GM12878 (cell line): ENCODE measurements at regions of chr9 and their contacts with region 1.

Region 1: DNA sequence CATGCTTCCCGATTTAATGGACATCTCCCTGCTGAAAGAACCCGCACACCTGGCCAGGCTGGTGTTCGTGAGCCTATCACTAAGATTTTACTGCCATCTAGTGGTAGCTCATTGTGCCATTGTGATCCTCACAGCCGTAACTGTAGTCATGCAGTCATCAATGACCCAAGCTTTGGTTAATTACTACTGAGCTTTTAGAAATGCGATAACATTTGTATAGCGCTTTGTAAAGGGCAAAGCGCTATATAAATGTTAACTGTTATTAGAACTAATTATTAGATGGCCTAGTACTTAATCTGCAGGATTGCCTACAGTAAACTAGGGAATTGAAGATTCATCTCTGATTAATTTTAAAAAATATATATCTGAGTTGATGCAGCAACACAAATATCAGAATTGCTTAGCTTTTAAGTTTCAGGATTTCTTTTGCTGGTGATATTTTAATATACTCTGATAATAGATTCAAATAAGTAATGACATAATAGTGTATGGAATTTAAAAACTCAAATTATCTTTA is 90.2 kb downstream of the HACD4 start:
- DNase-seq: peak; percentile 54
- ATAC-seq: peak; percentile 100
- H3K4me3 ChIP-seq: no peak overlapping the region
- H3K27ac ChIP-seq: no peak overlapping the region
- H3K4me1 ChIP-seq: no peaks in the 10 kb centered on the region
- H3K27me3 ChIP-seq: no peaks in the 10 kb centered on the region
- CTCF ChIP-seq: peak; percentile 77 to 84 (median 84)
- EP300 ChIP-seq: no peak
- POLR2A ChIP-seq: no peak
- RAD21 ChIP-seq: peak; percentile 93

Region 2: GRCh38 chr9:19925817-19926503 is 1015.3 kb before region 1 on chr9:
- CTCF ChIA-PET with region 1: interaction called, 12 read pairs
- POLR2A ChIA-PET with region 1: no interaction called
- RAD21 ChIA-PET with region 1: interaction called, 11 read pairs
- SMC1A ChIA-PET with region 1: interaction called, 6 read pairs
- in situ Hi-C with region 1: loop called (anchors 5 kb)
- intact Hi-C with region 1: loop called (anchors 1 kb)
- DNase-seq: peak; percentile 48
- ATAC-seq: peak; percentile 98
- H3K4me3 ChIP-seq: peak overlapping the region; percentile 56; the same call in 1 of the 2 replicates
- H3K27ac ChIP-seq: no peak overlapping the region
- H3K4me1 ChIP-seq: no peaks in the 10 kb centered on the region; the same call in 1 of the 2 replicates
- H3K27me3 ChIP-seq: no peaks in the 10 kb centered on the region; a peak in 2 of 4 replicates
- CTCF ChIP-seq: peak; percentile 94 to 97 (median 96)
- EP300 ChIP-seq: no peak
- POLR2A ChIP-seq: no peak
- RAD21 ChIP-seq: peak; percentile 98

Region 3: DNA sequence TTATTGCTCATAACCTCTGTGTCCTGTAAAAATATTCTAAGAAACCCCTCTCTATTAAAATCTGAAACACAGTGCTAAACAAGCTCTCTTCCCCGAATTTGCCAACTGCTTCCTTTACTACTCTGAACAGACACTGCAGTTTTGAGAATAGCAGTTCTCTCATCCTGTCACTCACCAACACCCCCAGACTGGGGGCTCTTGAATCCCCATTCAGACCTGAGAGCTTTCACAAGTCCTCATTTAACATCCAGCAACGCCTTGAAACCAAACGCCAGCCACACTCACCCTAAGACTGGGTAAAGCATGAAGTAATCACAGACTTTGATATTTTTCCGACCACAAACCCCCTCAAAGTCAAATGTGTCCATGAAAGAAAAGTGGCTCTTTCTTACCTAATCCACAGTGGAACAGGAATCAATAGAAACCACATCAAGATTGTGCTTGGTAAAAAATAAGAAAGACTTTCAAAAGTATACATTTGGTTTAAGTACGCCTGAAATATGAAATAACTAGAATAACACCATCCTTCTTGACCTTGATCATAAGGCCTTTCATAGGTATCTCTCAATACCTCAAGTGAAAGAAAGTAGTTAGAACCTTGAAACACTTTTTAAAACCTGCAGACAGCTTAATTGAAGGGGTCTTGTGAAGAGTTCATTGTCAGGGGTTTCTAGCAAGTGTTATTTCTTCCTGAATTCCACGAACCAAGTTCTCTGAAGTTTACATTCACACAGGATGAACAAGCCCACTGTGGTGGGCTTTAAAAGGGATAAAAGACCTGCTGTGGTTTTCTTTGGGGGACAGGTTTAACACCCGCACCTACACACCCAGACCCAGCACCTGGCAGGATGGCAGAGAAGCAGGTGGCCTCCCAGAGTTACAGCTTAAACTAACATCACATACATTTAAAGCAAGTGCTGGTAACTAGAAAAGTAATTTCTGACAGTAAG is 731.6 kb before region 1 on chr9:
- CTCF ChIA-PET with region 1: no interaction called
- POLR2A ChIA-PET with region 1: no interaction called
- RAD21 ChIA-PET with region 1: no interaction called
- SMC1A ChIA-PET with region 1: no interaction called
- in situ Hi-C with region 1: no loop called
- intact Hi-C with region 1: loop called (anchors 10 kb)
- DNase-seq: peak; percentile 2
- ATAC-seq: peak; percentile 38
- H3K4me3 ChIP-seq: no peak overlapping the region
- H3K27ac ChIP-seq: no peak overlapping the region
- H3K4me1 ChIP-seq: no peaks in the 10 kb centered on the region
- H3K27me3 ChIP-seq: no peaks in the 10 kb centered on the region
- CTCF ChIP-seq: no peak
- EP300 ChIP-seq: no peak
- POLR2A ChIP-seq: no peak
- RAD21 ChIP-seq: no peak

Region 4: DNA sequence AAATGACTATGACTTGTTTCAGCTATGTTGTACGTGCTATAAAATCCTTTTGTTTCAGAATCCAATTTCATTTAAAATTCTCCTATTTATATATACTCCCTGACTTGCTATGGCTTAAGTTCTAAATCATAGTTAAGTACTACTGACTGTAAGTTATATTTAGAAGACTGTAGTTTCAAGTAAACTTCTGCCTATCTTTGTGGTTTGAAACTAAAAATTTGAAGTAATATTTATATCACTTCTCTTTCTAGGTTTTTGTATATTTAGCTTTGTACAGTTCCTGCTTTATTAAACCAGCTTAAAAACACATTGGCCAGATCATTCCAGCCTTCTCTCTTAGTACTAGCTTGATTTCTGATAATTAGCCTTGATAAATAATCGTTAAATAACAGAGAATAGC is 515.2 kb before region 1 on chr9:
- CTCF ChIA-PET with region 1: interaction called, 7 read pairs
- POLR2A ChIA-PET with region 1: no interaction called
- RAD21 ChIA-PET with region 1: interaction called, 5 read pairs
- SMC1A ChIA-PET with region 1: interaction called, 3 read pairs
- in situ Hi-C with region 1: no loop called
- intact Hi-C with region 1: loop called (anchors 2 kb)
- DNase-seq: no peak
- ATAC-seq: peak; percentile 70
- H3K4me3 ChIP-seq: no peak overlapping the region; the same call in 1 of the 2 replicates
- H3K27ac ChIP-seq: no peak overlapping the region; the same call in 1 of the 2 replicates
- H3K4me1 ChIP-seq: peaks cover 14% of the 10 kb centered on the region; the same call in 1 of the 2 replicates
- H3K27me3 ChIP-seq: no peaks in the 10 kb centered on the region
- CTCF ChIP-seq: no peak
- EP300 ChIP-seq: no peak
- POLR2A ChIP-seq: no peak
- RAD21 ChIP-seq: no peak

Region 5: GRCh38 chr9:20884985-20885593 is 56.1 kb before region 1 on chr9:
- CTCF ChIA-PET with region 1: interaction called, 39 read pairs
- POLR2A ChIA-PET with region 1: no interaction called
- RAD21 ChIA-PET with region 1: interaction called, 9 read pairs
- SMC1A ChIA-PET with region 1: interaction called, 16 read pairs
- in situ Hi-C with region 1: no loop called
- intact Hi-C with region 1: loop called (anchors 1 kb)
- DNase-seq: peak; percentile 15
- ATAC-seq: peak; percentile 89
- H3K4me3 ChIP-seq: no peak overlapping the region
- H3K27ac ChIP-seq: no peak overlapping the region
- H3K4me1 ChIP-seq: no peaks in the 10 kb centered on the region
- H3K27me3 ChIP-seq: no peaks in the 10 kb centered on the region
- CTCF ChIP-seq: peak; percentile 52 to 56 (median 52)
- EP300 ChIP-seq: no peak
- POLR2A ChIP-seq: no peak
- RAD21 ChIP-seq: peak; percentile 27; the same call in 1 of the 2 replicates

Region 6: GRCh38 chr9:20929276-20929675 is 12.0 kb before region 1 on chr9:
- CTCF ChIA-PET with region 1: interaction called, 36 read pairs
- POLR2A ChIA-PET with region 1: no interaction called
- RAD21 ChIA-PET with region 1: interaction called, 4 read pairs
- SMC1A ChIA-PET with region 1: interaction called, 12 read pairs
- in situ Hi-C with region 1: no loop called
- intact Hi-C with region 1: no loop called
- DNase-seq: no peak
- ATAC-seq: no peak
- H3K4me3 ChIP-seq: no peak overlapping the region
- H3K27ac ChIP-seq: no peak overlapping the region
- H3K4me1 ChIP-seq: no peaks in the 10 kb centered on the region
- H3K27me3 ChIP-seq: no peaks in the 10 kb centered on the region
- CTCF ChIP-seq: no peak
- EP300 ChIP-seq: no peak
- POLR2A ChIP-seq: no peak
- RAD21 ChIP-seq: no peak

Region 7: GRCh38 chr9:21110708-21111576 is 169.7 kb after region 1 on chr9:
- CTCF ChIA-PET with region 1: interaction called, 47 read pairs
- POLR2A ChIA-PET with region 1: no interaction called
- RAD21 ChIA-PET with region 1: interaction called, 19 read pairs
- SMC1A ChIA-PET with region 1: interaction called, 9 read pairs
- in situ Hi-C with region 1: no loop called
- intact Hi-C with region 1: loop called (anchors 5 kb)
- DNase-seq: peak; percentile 44
- ATAC-seq: peak; percentile 99
- H3K4me3 ChIP-seq: no peak overlapping the region
- H3K27ac ChIP-seq: no peak overlapping the region
- H3K4me1 ChIP-seq: no peaks in the 10 kb centered on the region
- H3K27me3 ChIP-seq: no peaks in the 10 kb centered on the region
- CTCF ChIP-seq: peak; percentile 77 to 87 (median 78)
- EP300 ChIP-seq: no peak
- POLR2A ChIP-seq: no peak
- RAD21 ChIP-seq: peak; percentile 97

Region 8: GRCh38 chr9:21141427-21141882 is 200.2 kb after region 1 on chr9 and contains the start of gene IFNW1:
- CTCF ChIA-PET with region 1: no interaction called
- POLR2A ChIA-PET with region 1: no interaction called
- RAD21 ChIA-PET with region 1: no interaction called
- SMC1A ChIA-PET with region 1: no interaction called
- in situ Hi-C with region 1: no loop called
- intact Hi-C with region 1: no loop called
- DNase-seq: no peak
- ATAC-seq: peak; percentile 70
- H3K4me3 ChIP-seq: no peak within 1 kb of the TSS
- H3K27ac ChIP-seq: no peak within 1 kb of the TSS
- H3K4me1 ChIP-seq: peaks cover 22% of the 10 kb centered on the region
- H3K27me3 ChIP-seq: no peaks in the 10 kb centered on the region
- CTCF ChIP-seq: no peak; a peak in 1 of 6 replicates
- EP300 ChIP-seq: no peak
- POLR2A ChIP-seq: no peak
- RAD21 ChIP-seq: 0 out of 2 replicates have a peak, but pooled peaks have one; percentile 22
- polyA plus RNA-seq, gene IFNW1: 0.09 TPM in 1 of 2 experiments, not detected in the other